ENCODE measurements at regions of chr17 and their contacts with region 1.

Region 1: GRCh38 chr17:19766422-19767270 is 18.5 kb upstream of the ALDH3A1 start:
- DNase-seq: peak; percentile 77 to 88 (median 79)
- ATAC-seq: peak; percentile 86 to 92 (median 89)
- H3K4me3 ChIP-seq: no peak overlapping the region
- H3K27ac ChIP-seq: no peak overlapping the region
- H3K4me1 ChIP-seq: peaks cover 0 to 10% (median 0%) of the 10 kb centered on the region in 12 donors
- H3K27me3 ChIP-seq: no peaks in the 10 kb centered on the region
- CTCF ChIP-seq: peak; percentile 86 to 99 (median 96)
- POLR2A ChIP-seq: no peak

Region 2: DNA sequence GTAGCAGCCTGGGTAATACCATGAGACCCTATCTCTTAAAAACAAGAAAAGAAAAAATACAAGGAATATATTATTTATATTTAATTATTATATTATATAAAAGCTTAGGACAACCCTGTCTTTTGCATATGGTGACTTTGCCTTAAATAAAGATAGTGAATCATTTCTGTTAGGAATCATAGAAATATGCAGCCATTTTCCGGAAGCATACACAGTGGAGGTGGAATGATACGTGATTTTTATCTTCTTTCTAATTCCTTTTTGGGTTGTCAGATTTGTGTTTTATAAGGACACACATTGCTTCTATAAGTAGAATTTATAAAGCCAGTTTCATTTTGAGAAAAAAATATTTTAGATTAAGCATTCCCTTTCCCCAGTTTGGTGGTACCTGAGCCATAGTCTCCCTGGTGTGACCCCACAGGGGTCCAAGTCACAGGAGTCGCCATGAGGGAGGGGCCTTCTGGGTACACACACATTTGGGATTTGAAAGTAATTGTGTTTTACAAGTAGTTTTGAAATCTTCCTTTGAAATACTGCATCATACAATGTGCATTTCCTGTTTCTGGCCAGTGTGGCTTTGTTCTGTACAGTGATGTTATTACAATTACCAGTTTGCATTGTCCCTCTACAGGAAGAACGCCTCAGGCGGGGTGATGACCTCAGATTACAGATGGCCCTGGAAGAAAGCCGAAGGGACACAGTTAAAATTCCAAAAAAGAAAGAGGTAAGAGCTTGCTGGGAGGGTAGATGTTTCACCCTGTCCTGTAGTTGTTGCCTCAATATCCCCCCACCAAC is 455.0 kb before region 1 on chr17:
- intact Hi-C with region 1: loop called in 1 of 10 experiments (anchors 5 kb)
- DNase-seq: peak in 3 of 5 donors; percentile 37 to 56 (median 52)
- ATAC-seq: peak; percentile 60 to 84 (median 66)
- H3K4me3 ChIP-seq: no peak overlapping the region
- H3K27ac ChIP-seq: peak overlapping the region; percentile 28 to 85 (median 79)
- H3K4me1 ChIP-seq: peaks cover 0 to 43% (median 27%) of the 10 kb centered on the region in 12 donors
- H3K27me3 ChIP-seq: peaks cover 0 to 45% (median 0%) of the 10 kb centered on the region in 9 donors
- CTCF ChIP-seq: no peak
- POLR2A ChIP-seq: no peak

Region 3: GRCh38 chr17:19362277-19363113 is 404.2 kb before region 1 on chr17 and contains the start of gene B9D1:
- intact Hi-C with region 1: loop called in 9 of 10 experiments (anchors 2 to 10 kb)
- DNase-seq: peak; percentile 90 to 97 (median 93)
- ATAC-seq: peak; percentile 93 to 97 (median 96)
- H3K4me3 ChIP-seq: peak within 1 kb of the TSS; percentile 58 to 87 (median 79)
- H3K27ac ChIP-seq: peak within 1 kb of the TSS in 11 of 12 donors; percentile 48 to 88 (median 75)
- H3K4me1 ChIP-seq: peaks cover 0 to 20% (median 12%) of the 10 kb centered on the region in 12 donors
- H3K27me3 ChIP-seq: peaks cover 0 to 2% (median 0%) of the 10 kb centered on the region in 9 donors
- CTCF ChIP-seq: peak; percentile 96 to 100 (median 98)
- POLR2A ChIP-seq: peak in 1 of 2 donors; percentile 50
- total RNA-seq, gene B9D1: 5.6 to 27.9 (median 10.8) TPM

Region 4: GRCh38 chr17:19464031-19465026 is 302.3 kb before region 1 on chr17:
- intact Hi-C with region 1: loop called in 1 of 10 experiments (anchors 5 kb)
- DNase-seq: no peak
- ATAC-seq: no peak
- H3K4me3 ChIP-seq: peak overlapping the region in 1 of 12 donors; percentile 42
- H3K27ac ChIP-seq: peak overlapping the region in 2 of 12 donors; percentile 68 to 89
- H3K4me1 ChIP-seq: peaks cover 0 to 38% (median 0%) of the 10 kb centered on the region in 12 donors
- H3K27me3 ChIP-seq: no peaks in the 10 kb centered on the region
- CTCF ChIP-seq: no peak
- POLR2A ChIP-seq: no peak

Region 5: GRCh38 chr17:19507775-19508576 is 258.7 kb before region 1 on chr17:
- intact Hi-C with region 1: loop called in 2 of 10 experiments (anchors 1 to 5 kb)
- DNase-seq: peak; percentile 81 to 89 (median 89)
- ATAC-seq: peak; percentile 79 to 94 (median 92)
- H3K4me3 ChIP-seq: peak overlapping the region; percentile 45 to 82 (median 70)
- H3K27ac ChIP-seq: peak overlapping the region; percentile 65 to 94 (median 80)
- H3K4me1 ChIP-seq: peaks cover 0 to 13% (median 0%) of the 10 kb centered on the region in 12 donors
- H3K27me3 ChIP-seq: no peaks in the 10 kb centered on the region
- CTCF ChIP-seq: no peak
- POLR2A ChIP-seq: peak in 1 of 2 donors; percentile 27

Region 6: GRCh38 chr17:19513897-19514488 is 252.7 kb before region 1 on chr17:
- intact Hi-C with region 1: loop called (anchors 1 to 5 kb)
- DNase-seq: peak; percentile 59 to 73 (median 70)
- ATAC-seq: peak; percentile 56 to 86 (median 74)
- H3K4me3 ChIP-seq: peak overlapping the region in 6 of 12 donors; percentile 4 to 34 (median 22)
- H3K27ac ChIP-seq: peak overlapping the region in 11 of 12 donors; percentile 43 to 79 (median 69)
- H3K4me1 ChIP-seq: peaks cover 0 to 14% (median 8%) of the 10 kb centered on the region in 12 donors
- H3K27me3 ChIP-seq: no peaks in the 10 kb centered on the region
- CTCF ChIP-seq: peak; percentile 82 to 97 (median 90)
- POLR2A ChIP-seq: no peak

Region 7: DNA sequence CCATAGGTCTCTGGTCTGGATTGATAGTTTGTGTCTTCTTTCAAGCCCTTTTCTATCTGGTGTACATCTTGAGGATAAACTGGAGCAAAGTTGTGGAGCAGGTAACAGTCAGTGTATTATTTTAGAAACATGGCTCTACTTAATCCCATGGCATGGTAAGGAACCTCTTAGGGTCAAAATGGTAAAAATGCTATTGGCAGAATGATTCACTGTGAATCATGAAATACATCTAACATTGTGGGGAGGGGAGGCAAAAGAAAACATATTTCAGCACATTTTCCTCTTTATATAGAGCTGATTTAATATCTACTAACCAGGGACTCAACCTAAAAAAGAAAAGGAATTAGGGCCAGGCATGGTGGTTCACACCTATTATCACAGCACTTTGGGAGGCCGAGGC is 136.0 kb before region 1 on chr17:
- intact Hi-C with region 1: no loop called
- DNase-seq: no peak
- ATAC-seq: no peak
- H3K4me3 ChIP-seq: no peak overlapping the region
- H3K27ac ChIP-seq: no peak overlapping the region
- H3K4me1 ChIP-seq: no peaks in the 10 kb centered on the region
- H3K27me3 ChIP-seq: no peaks in the 10 kb centered on the region
- CTCF ChIP-seq: no peak
- POLR2A ChIP-seq: no peak

Region 8: DNA sequence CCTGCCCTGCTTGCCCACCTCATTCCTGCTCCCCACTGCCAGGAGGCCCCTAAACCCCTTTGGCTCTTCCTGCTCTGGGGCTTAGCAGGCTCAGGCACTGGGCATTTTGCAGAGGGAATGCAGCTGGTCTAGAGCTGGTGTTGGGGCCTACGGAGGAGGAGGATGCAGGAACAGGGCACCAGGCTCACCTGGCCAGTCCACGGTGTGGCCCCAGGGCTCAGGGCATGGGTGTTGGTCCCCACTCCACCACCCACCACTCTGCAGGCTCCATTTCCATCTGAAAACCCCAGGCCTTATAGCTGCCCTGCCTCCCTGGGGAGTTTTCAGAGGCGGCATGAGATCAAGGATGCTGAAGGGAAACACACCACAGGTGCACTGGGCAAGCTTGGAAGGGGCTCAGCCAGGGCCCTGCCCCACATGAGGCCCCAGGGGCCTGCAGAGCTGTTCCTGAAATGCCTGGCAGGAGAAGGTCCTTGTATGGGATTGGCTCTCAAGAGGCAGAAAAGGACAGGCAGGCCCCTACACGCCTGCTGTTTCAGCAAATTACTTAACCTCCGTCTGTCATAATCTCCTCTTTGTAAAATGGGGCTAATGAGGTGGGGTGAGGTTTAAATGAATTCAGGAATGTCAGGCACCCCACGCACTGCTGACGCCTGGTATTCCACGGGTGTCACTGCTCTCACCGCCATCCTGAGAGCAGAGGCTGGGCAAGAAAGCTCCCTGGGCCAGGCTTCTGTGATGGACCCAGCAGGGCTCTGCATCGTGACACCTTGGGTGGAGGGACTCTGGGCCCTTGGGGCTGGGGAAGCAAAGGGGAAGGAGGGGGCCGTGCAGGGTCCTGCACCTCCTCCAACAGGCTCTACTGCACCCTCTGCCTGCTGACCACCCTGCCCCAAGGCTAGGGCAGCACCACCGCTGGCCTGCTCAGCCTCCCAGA is 59.6 kb before region 1 on chr17:
- intact Hi-C with region 1: loop called in 1 of 10 experiments (anchors 10 kb)
- DNase-seq: no peak
- ATAC-seq: no peak
- H3K4me3 ChIP-seq: no peak overlapping the region
- H3K27ac ChIP-seq: no peak overlapping the region
- H3K4me1 ChIP-seq: peaks cover 0 to 23% (median 10%) of the 10 kb centered on the region in 12 donors
- H3K27me3 ChIP-seq: no peaks in the 10 kb centered on the region
- CTCF ChIP-seq: no peak
- POLR2A ChIP-seq: no peak

Measured in heart left ventricle (tissue), 16 donors.